Activated CD4-positive, alpha-beta T cell treated with anti-CD3 and anti-CD28 coated beads for 36 hours (primary cell): ENCODE measurements at regions of chr7 and their contacts with region 1.

Region 1: GRCh38 chr7:130365511-130366441 is 14.5 kb upstream of the CPA1 start:
- DNase-seq: peak; percentile 57
- ATAC-seq: no peak
- H3K4me3 Mint-ChIP-seq: no peak overlapping the region
- H3K27ac Mint-ChIP-seq: no peak overlapping the region
- H3K4me1 Mint-ChIP-seq: peaks cover 43% of the 10 kb centered on the region
- H3K27me3 Mint-ChIP-seq: no peaks in the 10 kb centered on the region

Region 2: DNA sequence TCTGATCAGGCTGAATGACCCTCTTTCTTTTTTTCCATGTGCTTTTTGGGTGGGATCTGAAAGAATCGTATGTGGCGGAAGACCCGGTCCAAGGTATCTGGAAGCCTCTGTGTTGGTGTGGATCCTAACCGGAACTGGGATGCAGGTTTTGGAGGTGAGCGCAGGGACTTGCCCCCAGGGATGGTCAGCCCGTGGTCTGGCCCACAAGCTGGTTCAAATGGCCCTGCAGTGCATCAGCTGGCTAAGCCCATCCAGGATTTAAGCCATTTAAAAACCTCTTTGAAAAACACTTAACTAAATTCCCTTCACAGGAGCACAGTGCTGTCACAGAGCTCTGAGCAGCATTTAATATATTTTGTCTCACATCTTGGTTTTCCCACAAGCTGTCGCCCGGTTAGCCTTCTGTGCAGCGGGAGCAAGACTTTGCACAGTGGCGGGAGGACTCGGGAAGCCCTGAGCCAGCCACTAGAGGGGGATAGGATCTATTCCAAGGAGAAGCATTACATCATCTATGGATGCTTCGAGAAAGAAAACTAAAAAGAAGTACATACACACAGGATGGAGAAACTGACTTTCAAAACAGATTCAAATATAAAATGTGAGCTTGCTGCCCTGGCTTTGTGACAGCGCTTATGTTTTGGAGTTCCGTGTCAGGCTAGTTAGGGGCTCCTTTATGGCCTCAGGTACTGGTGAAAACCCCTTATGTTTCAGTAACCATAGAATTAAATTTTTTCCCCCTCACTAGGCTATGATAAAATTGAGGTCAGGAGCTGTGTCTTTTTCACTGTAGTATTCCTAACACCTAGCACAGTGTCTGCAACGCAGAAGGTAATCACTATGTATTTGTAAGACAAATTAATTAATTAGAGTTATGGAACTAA is 87.8 kb before region 1 on chr7:
- CTCF ChIA-PET with region 1: no interaction called
- POLR2A ChIA-PET with region 1: no interaction called
- intact Hi-C with region 1: loop called (anchors 1 kb)
- DNase-seq: no peak
- ATAC-seq: no peak
- H3K4me3 Mint-ChIP-seq: no peak overlapping the region
- H3K27ac Mint-ChIP-seq: peak overlapping the region; percentile 79
- H3K4me1 Mint-ChIP-seq: peaks cover 37% of the 10 kb centered on the region
- H3K27me3 Mint-ChIP-seq: peaks cover 4% of the 10 kb centered on the region

Region 3: GRCh38 chr7:130352221-130353075 is 13.3 kb before region 1 on chr7:
- CTCF ChIA-PET with region 1: no interaction called
- POLR2A ChIA-PET with region 1: no interaction called
- intact Hi-C with region 1: no loop called
- DNase-seq: no peak
- ATAC-seq: no peak
- H3K4me3 Mint-ChIP-seq: no peak overlapping the region
- H3K27ac Mint-ChIP-seq: no peak overlapping the region
- H3K4me1 Mint-ChIP-seq: peaks cover 15% of the 10 kb centered on the region
- H3K27me3 Mint-ChIP-seq: no peaks in the 10 kb centered on the region

Region 4: GRCh38 chr7:130393101-130393561 is 27.4 kb after region 1 on chr7:
- CTCF ChIA-PET with region 1: no interaction called
- POLR2A ChIA-PET with region 1: no interaction called
- intact Hi-C with region 1: no loop called
- DNase-seq: no peak
- ATAC-seq: peak; percentile 50
- H3K4me3 Mint-ChIP-seq: no peak overlapping the region
- H3K27ac Mint-ChIP-seq: no peak overlapping the region
- H3K4me1 Mint-ChIP-seq: peaks cover 25% of the 10 kb centered on the region
- H3K27me3 Mint-ChIP-seq: no peaks in the 10 kb centered on the region

Region 5: GRCh38 chr7:130417213-130417612 is 51.4 kb after region 1 on chr7:
- CTCF ChIA-PET with region 1: interaction called, 3 read pairs
- POLR2A ChIA-PET with region 1: no interaction called
- intact Hi-C with region 1: loop called in 1 of 2 experiments (anchors 2 kb)
- DNase-seq: peak; percentile 43
- ATAC-seq: peak; percentile 69
- H3K4me3 Mint-ChIP-seq: peak overlapping the region; percentile 20
- H3K27ac Mint-ChIP-seq: peak overlapping the region; percentile 86
- H3K4me1 Mint-ChIP-seq: peaks cover 74% of the 10 kb centered on the region
- H3K27me3 Mint-ChIP-seq: no peaks in the 10 kb centered on the region